ENCODE measurements at regions of chr17 and their contacts with region 1.

Region 1: DNA sequence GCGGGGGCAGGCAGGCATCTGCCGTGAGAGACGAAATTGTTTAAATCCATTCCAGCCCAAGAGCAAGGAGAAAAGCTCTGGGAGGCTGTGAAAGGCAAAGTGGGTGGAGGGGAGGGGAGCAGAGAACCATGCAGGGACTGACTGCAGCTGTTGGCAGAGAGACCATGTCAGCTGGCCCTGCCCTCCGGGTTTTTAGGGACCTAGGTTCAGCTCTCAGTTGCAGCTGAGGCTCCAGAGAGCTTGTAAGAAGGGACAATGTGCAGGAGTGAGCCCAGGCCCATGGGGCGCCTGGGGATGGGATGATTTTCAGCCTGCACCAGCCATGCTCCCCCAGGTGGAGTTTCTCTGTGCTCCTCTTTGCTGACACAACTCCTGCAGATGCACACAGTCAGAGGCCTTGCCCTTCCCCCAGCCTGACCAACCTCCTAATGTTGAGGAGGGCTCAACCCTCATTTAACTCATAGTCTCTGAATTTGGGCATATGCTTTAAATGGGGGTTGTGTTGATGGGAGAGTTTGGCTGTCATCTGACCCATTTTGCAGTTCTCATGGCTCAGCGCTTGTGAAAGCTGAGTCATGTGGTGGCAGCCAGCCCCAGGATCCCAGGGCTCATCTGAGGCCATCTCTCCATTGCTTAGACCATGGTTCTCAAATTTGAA is 70.9 kb downstream of the PLXDC1 start:
- DNase-seq: no peak
- H3K4me3 ChIP-seq: no peak overlapping the region
- H3K27ac ChIP-seq: no peak overlapping the region
- H3K4me1 ChIP-seq: peaks cover 7% of the 10 kb centered on the region
- H3K27me3 ChIP-seq: no peaks in the 10 kb centered on the region
- CTCF ChIP-seq: no peak
- POLR2A ChIP-seq: no peak

Region 2: GRCh38 chr17:38982858-38983746 is 97.4 kb before region 1 on chr17:
- intact Hi-C with region 1: loop called (anchors 10 kb)
- DNase-seq: peak; percentile 70
- H3K4me3 ChIP-seq: no peak overlapping the region
- H3K27ac ChIP-seq: no peak overlapping the region
- H3K4me1 ChIP-seq: no peaks in the 10 kb centered on the region
- H3K27me3 ChIP-seq: no peaks in the 10 kb centered on the region
- CTCF ChIP-seq: peak; percentile 59 to 69 (median 68)
- POLR2A ChIP-seq: no peak

Region 3: GRCh38 chr17:39174907-39175694 is 94.6 kb after region 1 on chr17:
- intact Hi-C with region 1: no loop called
- DNase-seq: peak; percentile 88
- H3K4me3 ChIP-seq: peak overlapping the region; percentile 26 to 41
- H3K27ac ChIP-seq: no peak overlapping the region
- H3K4me1 ChIP-seq: no peaks in the 10 kb centered on the region
- H3K27me3 ChIP-seq: no peaks in the 10 kb centered on the region
- CTCF ChIP-seq: peak; percentile 77 to 93 (median 77)
- POLR2A ChIP-seq: no peak